GM10248 (cell line): ENCODE measurements at regions of chr1 and their contacts with region 1.

Region 1: GRCh38 chr1:198691063-198691462 is 52.2 kb downstream of the PTPRC start:
- DNase-seq: no peak
- CTCF ChIP-seq: no peak

Region 2: GRCh38 chr1:198534548-198535418 is 156.3 kb before region 1 on chr1:
- CTCF ChIA-PET with region 1: no interaction called
- POLR2A ChIA-PET with region 1: no interaction called
- DNase-seq: no peak
- CTCF ChIP-seq: no peak

Region 3: DNA sequence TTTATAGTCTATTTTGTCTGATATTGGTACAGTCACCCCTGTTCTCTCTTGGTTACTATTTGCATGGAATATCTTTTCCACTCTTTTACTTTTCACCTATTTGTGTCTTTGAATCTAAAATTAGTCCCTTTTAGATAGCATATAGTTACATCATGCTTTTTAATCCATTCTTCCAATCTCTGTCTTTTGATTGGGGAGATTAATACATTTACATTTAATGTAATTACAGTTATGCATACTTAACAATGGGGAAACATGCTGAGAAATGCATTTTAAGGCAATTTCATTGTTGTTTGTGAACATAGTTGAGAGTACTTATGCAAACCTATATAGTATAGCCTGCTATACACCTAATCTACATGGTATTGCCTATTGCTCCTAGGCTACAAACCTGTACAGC is 102.2 kb before region 1 on chr1:
- CTCF ChIA-PET with region 1: no interaction called
- POLR2A ChIA-PET with region 1: no interaction called
- DNase-seq: no peak
- CTCF ChIP-seq: no peak

Region 4: DNA sequence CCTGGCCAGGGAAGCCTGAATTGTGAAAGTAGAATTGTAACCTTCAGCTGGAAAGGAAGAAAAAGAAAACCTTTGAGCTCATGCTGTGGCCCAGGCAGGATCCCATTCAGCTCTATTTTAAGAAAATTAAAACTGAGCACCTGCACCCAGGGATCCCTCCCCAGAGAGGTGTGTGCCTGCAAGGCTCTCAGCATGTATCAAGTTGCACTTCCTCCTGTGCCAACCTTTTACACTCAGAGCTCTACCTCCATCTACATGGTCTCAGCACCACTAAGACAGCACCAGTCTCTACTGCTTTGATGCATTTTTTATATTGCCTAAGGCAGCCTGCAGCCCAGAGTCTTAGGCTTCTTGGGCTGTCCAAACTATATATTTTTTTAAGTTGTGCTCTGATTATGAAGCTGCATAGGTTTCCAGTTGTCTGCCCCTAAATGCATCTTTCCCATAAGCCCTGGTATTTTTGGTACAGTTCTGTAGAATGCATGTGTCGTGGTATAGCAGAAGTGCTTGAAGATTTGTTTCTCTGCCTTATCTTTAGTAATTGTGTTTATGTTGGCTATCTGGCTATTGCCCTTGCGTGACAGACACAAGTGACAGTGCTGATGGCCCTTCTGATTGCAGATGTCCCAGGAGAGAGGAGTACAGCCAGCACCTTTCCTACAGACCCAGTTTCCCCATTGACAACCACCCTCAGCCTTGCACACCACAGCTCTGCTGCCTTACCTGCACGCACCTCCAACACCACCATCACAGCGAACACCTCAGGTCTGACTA is 10.9 kb after region 1 on chr1:
- CTCF ChIA-PET with region 1: interaction called, 11 read pairs
- POLR2A ChIA-PET with region 1: no interaction called
- DNase-seq: no peak
- CTCF ChIP-seq: no peak

Region 5: DNA sequence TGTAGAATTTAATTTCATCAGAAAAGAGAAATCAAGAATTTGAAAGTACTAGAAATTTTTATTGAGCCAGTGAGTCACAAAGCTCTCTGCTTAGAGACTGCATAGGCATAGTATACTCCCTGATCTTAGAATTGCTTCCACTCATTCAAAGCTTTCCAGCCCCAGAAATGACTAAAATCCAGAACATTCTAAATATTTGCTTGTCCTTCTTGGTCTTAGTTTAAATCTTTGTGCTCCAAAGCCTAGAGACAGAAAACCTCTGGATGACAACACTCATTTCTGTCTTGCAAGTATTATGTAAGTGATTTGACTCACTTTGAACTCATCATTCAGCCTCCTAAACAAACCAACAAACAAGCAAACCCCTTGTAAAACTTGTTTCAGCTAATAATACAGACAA is 22.0 kb after region 1 on chr1:
- CTCF ChIA-PET with region 1: no interaction called
- POLR2A ChIA-PET with region 1: no interaction called
- DNase-seq: no peak
- CTCF ChIP-seq: no peak

Region 6: GRCh38 chr1:199009447-199009846 is 318.4 kb after region 1 on chr1:
- CTCF ChIA-PET with region 1: no interaction called
- POLR2A ChIA-PET with region 1: no interaction called
- DNase-seq: peak; percentile 10
- CTCF ChIP-seq: no peak